Right ventricle myocardium inferior (tissue), 1 donor: ENCODE measurements at regions of chr11 and their contacts with region 1.

Region 1: GRCh38 chr11:94623120-94623735 is 56.1 kb downstream of the PIWIL4 start:
- DNase-seq: no peak
- ATAC-seq: peak; percentile 93

Region 2: GRCh38 chr11:94762208-94762607 is 139.0 kb after region 1 on chr11:
- intact Hi-C with region 1: loop called (anchors 1 kb)
- DNase-seq: no peak
- ATAC-seq: no peak

Region 3: GRCh38 chr11:94897330-94897768 is 274.1 kb after region 1 on chr11:
- intact Hi-C with region 1: loop called (anchors 1 kb)
- DNase-seq: no peak
- ATAC-seq: no peak

Region 4: DNA sequence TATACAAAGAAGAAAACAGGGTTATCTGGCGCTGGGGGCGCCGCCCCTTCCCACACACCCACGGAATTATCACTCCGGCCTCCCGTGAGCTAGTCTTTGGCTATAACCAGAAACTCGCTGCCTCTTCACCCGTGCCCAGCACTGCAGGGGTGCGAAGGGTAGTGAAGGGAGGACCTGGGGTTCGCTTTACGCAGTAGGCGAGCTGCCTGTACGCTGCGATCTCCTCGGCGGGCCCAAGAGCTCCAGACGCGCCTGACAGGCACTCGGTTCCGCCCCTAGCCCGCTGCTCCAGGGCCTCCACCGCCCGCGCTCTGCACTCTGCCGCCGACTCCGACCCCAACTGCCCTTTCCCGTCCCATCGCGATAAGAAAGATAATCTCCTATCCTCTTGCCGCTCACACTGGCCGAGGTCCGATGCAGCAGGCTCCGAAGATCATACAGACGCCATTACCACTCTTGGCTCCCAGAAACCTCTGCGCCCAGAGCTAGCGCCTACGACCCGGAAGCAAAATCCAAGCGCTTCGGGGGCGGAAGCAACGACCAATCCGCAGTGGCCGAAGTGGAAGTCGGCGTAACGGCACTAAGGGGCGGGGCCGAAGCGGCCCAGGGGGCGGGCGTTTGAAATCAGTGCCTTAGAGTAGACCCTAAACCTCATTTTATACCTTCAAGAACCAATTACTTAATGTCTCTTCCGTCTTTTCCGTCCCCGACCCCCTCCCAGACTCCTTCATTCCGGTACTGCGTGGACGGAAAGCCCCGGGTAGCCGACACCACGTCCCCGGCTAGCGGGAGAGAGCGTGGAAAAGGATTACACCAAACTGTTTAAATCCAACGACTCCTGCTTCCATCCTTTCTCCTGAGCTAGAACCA is 350.1 kb after region 1 on chr11 and contains the starts of genes CWC15 and KDM4D:
- intact Hi-C with region 1: loop called (anchors 2 kb)
- DNase-seq: peak; percentile 97
- ATAC-seq: peak; percentile 100
- total RNA-seq, gene CWC15: 79.1 TPM
- total RNA-seq, gene KDM4D: 0.54 TPM